ENCODE measurements at regions of chr9 and their contacts with region 1.

Region 1: DNA sequence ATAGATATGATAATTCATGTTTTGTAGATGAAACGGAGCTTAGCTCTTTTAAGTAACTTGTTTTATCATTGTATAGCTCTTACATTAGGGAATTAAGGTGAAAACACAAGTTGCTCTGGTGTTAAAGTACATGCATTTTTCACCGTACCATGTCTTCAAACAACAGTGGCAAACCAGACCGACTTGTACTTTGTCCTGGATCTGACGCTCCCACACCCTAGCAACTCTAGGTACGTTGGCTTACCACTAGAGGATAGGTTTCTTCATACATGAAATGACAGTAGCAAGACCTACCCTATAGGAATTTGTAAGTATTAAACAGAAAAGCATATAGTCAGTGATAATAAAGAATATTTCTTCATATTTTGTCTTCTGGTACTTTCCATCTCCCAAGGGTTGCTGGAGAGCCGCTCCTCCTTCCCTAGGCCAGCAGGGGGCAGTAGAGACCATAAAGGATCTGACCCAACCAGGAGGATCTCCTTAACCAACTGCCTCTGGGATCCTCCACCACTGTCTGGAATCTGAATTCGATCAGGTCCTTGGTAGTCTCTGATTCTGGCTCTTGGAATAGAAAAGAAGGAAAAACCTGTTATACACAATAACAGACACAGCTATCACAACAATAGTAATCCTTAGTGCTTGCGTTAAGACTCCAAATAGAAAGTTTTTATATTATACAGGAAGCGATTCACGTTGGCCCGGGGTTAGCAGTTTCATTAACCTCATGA is 136.7 kb downstream of the CAVIN4 start:
- DNase-seq: peak; percentile 20
- ATAC-seq: peak; percentile 74; the same call in 1 of the 2 replicates
- H3K4me3 ChIP-seq: no peak overlapping the region
- H3K27ac ChIP-seq: no peak overlapping the region
- H3K4me1 ChIP-seq: no peaks in the 10 kb centered on the region
- H3K27me3 ChIP-seq: no peaks in the 10 kb centered on the region
- CTCF ChIP-seq: peak; percentile 85

Region 2: GRCh38 chr9:99377790-99378775 is 1336.5 kb before region 1 on chr9:
- CTCF ChIA-PET with region 1: no interaction called
- POLR2A ChIA-PET with region 1: no interaction called
- in situ Hi-C with region 1: no loop called
- intact Hi-C with region 1: no loop called
- DNase-seq: no peak
- ATAC-seq: no peak
- H3K4me3 ChIP-seq: no peak overlapping the region
- H3K27ac ChIP-seq: no peak overlapping the region
- H3K4me1 ChIP-seq: no peaks in the 10 kb centered on the region
- H3K27me3 ChIP-seq: no peaks in the 10 kb centered on the region; the same call in 1 of the 2 replicates
- CTCF ChIP-seq: no peak

Region 3: DNA sequence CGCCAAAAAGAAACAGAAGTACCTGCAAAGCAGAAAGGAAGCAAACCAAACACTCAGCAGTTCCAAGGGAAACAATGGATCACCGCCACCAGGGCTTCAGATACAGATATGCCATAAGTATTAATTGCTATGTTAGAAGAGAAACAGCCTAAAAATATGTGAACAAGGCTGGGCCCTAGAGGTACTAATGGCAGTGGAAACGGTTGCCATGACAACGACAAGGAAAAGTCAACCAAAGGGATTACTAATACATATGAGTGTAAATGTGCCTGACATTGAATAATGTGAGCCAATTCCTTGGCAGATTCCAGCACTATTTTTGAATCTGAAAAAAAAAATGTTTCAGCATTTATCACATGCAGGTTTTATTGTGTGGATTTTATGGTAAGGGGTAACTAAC is 61.7 kb before region 1 on chr9:
- CTCF ChIA-PET with region 1: no interaction called
- POLR2A ChIA-PET with region 1: no interaction called
- in situ Hi-C with region 1: no loop called
- intact Hi-C with region 1: no loop called
- DNase-seq: no peak
- ATAC-seq: no peak
- H3K4me3 ChIP-seq: no peak overlapping the region
- H3K27ac ChIP-seq: no peak overlapping the region
- H3K4me1 ChIP-seq: no peaks in the 10 kb centered on the region
- H3K27me3 ChIP-seq: no peaks in the 10 kb centered on the region
- CTCF ChIP-seq: no peak

Region 4: GRCh38 chr9:100784755-100785154 is 70.2 kb after region 1 on chr9:
- CTCF ChIA-PET with region 1: no interaction called
- POLR2A ChIA-PET with region 1: no interaction called
- in situ Hi-C with region 1: no loop called
- intact Hi-C with region 1: no loop called
- DNase-seq: no peak
- ATAC-seq: no peak
- H3K4me3 ChIP-seq: no peak overlapping the region
- H3K27ac ChIP-seq: no peak overlapping the region
- H3K4me1 ChIP-seq: no peaks in the 10 kb centered on the region
- H3K27me3 ChIP-seq: no peaks in the 10 kb centered on the region
- CTCF ChIP-seq: no peak

Region 5: GRCh38 chr9:101229606-101230005 is 515.1 kb after region 1 on chr9:
- CTCF ChIA-PET with region 1: no interaction called
- POLR2A ChIA-PET with region 1: no interaction called
- in situ Hi-C with region 1: no loop called
- intact Hi-C with region 1: loop called (anchors 5 kb)
- DNase-seq: no peak
- ATAC-seq: no peak
- H3K4me3 ChIP-seq: no peak overlapping the region
- H3K27ac ChIP-seq: no peak overlapping the region
- H3K4me1 ChIP-seq: no peaks in the 10 kb centered on the region
- H3K27me3 ChIP-seq: no peaks in the 10 kb centered on the region
- CTCF ChIP-seq: no peak

Measured in Panc1 (cell line).